IMR-90 (cell line): ENCODE measurements at regions of chr19 and their contacts with region 1.

Region 1: DNA sequence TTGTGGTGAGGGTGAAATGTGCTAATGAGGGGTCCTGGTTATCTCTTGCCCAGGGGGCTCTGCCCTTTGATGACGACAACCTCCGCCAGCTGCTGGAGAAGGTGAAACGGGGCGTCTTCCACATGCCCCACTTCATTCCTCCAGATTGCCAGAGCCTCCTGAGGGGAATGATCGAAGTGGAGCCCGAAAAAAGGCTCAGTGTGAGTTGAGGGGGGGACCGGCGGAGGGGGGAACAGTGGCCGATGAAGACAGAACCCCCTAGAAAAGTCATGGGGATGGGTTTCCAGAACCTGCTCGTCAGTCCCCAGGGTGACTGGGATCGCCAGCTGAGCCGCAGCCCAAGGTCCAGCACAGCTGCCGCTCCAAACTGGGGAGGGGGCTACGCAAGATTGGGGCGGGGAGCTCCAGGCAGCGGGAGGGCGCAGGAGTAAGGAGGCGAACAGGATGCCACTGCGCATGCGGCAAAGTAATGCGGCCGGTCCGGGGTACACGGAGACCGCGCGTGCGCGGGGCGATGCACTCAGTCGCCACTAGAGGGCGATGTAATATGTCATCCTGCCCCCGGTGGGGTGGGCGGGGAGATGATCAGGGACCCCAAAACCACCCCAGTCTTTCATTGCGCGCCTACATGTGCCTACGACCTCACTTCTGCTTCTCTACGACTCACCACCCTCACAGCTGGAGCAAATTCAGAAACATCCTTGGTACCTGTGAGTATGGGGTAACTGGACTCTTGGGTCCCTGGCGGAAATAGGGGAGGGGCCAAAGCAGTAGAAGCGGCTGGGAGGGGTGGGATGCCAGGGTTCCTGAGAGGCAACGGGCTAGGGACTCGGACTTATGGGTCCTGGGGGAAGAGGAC is 17.9 kb downstream of the BRSK1 start:
- DNase-seq: peak; percentile 62
- ATAC-seq: peak; percentile 98
- H3K4me3 ChIP-seq: no peak overlapping the region
- H3K27ac ChIP-seq: no peak overlapping the region
- H3K4me1 ChIP-seq: no peaks in the 10 kb centered on the region
- H3K27me3 ChIP-seq: no peaks in the 10 kb centered on the region
- CTCF ChIP-seq: peak; percentile 89
- POLR2A ChIP-seq: no peak
- RAD21 ChIP-seq: peak; percentile 77

Region 2: DNA sequence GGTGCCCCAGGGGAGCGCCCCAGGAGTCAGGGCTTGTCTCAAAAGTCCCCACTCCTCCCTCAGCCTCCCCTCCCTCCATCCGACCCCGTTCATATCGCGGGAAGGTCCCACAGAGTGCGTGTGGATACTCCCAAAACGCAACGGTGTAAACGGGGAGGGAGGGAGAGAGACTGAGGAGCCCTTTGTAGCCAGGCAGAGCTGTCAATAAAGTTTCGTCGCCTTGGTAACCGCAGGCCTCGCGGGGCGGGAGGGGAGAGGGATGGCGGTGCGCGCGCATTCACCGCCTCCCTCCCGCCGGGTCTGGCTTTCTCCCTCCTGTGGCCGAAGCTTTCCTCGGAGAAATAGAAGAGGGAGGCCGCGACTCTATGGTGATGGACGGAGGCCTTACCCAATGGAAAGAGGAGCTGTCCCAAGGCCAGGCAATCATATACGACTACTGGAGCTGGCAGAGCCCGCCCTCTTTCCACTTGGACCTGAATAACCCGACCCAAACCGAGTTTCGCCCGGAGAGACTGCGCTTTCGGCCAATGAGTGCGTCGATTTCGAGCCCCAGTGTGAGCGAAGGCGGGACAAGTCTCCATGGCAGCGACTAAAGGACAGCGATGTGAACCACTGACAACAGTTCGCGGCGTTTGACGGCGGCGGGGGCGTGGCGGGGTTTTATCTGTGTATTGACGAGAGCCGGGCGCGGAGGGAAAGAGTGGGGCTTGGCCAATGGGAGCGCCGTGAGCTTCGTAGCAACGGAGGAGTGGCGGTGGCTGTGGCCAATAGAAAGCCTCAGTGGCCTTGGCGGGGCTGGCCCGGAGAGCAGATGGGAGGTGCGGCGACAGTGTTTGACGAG is 37.6 kb after region 1 on chr19 and contains the start of gene KMT5C:
- CTCF ChIA-PET with region 1: interaction called, 11 read pairs
- POLR2A ChIA-PET with region 1: no interaction called
- dilution Hi-C with region 1: no loop called
- in situ Hi-C with region 1: no loop called
- intact Hi-C with region 1: no loop called
- DNase-seq: peak; percentile 100
- ATAC-seq: peak; percentile 93
- H3K4me3 ChIP-seq: peak within 1 kb of the TSS; percentile 87
- H3K27ac ChIP-seq: peak within 1 kb of the TSS; percentile 88
- H3K4me1 ChIP-seq: peaks cover 9% of the 10 kb centered on the region
- H3K27me3 ChIP-seq: no peaks in the 10 kb centered on the region
- CTCF ChIP-seq: peak; percentile 55
- POLR2A ChIP-seq: peak; percentile 59; the same call in 1 of the 2 replicates
- RAD21 ChIP-seq: peak; percentile 21; the same call in 1 of the 2 replicates
- total RNA-seq, gene KMT5C: 1.8 and 1.9 TPM in 2 replicates